CD14-positive monocyte (primary cell): ENCODE measurements at regions of chr4 and their contacts with region 1.

Region 1: GRCh38 chr4:41692717-41693345 is 55.7 kb downstream of the PHOX2B start:
- DNase-seq: peak in 2 of 3 donors; percentile 0 to 24
- H3K4me3 ChIP-seq: no peak overlapping the region
- H3K4me3 Mint-ChIP-seq: no peak overlapping the region
- H3K27ac ChIP-seq: no peak overlapping the region
- H3K27ac Mint-ChIP-seq: no peak overlapping the region
- H3K4me1 ChIP-seq: no peaks in the 10 kb centered on the region
- H3K4me1 Mint-ChIP-seq: peaks cover 2% of the 10 kb centered on the region
- H3K27me3 ChIP-seq: peaks cover 0 to 16% of the 10 kb centered on the region in 2 donors
- H3K27me3 Mint-ChIP-seq: peaks cover 1 to 7% (median 5%) of the 10 kb centered on the region in 3 donors
- CTCF ChIP-seq: peak; percentile 73

Region 2: DNA sequence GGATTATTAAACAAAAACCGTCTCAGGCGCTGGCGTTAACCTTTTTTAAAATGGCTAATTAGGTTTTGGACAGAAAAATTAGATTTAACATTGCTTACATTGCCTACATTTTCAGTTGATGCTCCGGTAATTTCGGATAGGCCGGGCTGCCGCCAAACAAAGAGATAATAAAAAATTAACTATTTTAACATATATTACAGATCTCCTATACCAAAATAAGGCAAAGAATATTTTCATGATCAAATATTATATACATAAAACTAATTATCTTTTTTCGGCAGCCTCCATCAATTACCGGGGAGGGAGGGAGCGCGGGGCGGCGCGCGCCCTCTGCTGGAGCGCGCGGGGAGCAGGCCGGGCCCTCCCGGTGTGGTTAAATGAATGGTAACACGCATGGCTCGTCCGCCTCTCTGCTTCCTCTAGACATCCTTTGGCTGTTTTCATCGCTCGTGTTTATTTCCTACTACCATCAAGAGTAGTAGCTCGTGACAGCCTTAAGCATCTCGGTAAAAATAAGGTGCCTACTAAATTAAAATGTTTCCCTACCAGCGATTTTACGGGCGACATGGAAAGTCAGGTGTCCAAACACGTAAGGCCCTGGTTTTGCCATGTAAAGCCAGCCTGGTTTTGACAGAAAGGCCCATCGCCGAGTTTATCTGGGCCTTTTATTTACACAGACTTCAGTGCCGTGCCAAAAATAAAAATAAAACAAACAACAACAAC is 190.0 kb after region 1 on chr4:
- intact Hi-C with region 1: loop called (anchors 10 kb)
- DNase-seq: peak; percentile 12 to 31 (median 18)
- H3K4me3 ChIP-seq: peak overlapping the region in 1 of 3 experiments; percentile 42
- H3K4me3 Mint-ChIP-seq: peak overlapping the region in 1 of 2 donors; percentile 73
- H3K27ac ChIP-seq: no peak overlapping the region
- H3K27ac Mint-ChIP-seq: no peak overlapping the region
- H3K4me1 ChIP-seq: peaks cover 13 to 16% of the 10 kb centered on the region in 2 donors
- H3K4me1 Mint-ChIP-seq: peaks cover 11% of the 10 kb centered on the region
- H3K27me3 ChIP-seq: peaks cover 80 to 95% of the 10 kb centered on the region in 2 donors
- H3K27me3 Mint-ChIP-seq: peaks cover 83 to 88% (median 86%) of the 10 kb centered on the region in 3 donors
- CTCF ChIP-seq: peak; percentile 95